CD8-positive, alpha-beta memory T cell (primary cell): ENCODE measurements at regions of chr13 and their contacts with region 1.

Region 1: DNA sequence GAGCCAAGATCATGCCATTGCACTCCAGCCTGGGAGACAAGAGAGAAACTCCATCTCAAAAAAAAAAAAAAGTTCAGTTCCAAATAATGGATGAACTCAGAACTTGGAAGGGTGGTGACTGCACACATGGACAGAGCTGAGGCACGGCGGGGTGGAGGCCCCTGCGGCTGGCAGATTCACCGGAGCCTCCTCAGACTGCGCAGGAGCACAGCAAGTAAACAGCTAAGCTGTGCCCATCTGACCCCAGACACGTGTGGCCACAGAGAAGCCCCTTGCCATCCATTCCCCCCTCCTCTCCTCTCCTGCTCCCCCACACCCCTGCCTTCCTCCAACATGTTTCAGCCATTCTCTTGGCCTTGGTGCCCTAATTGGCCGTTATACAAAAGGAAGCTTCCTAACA is 15.6 kb upstream of the PROZ start:
- DNase-seq: no peak
- H3K4me3 ChIP-seq: no peak overlapping the region
- H3K4me3 Mint-ChIP-seq: no peak overlapping the region
- H3K27ac ChIP-seq: no peak overlapping the region
- H3K27ac Mint-ChIP-seq: no peak overlapping the region
- H3K4me1 ChIP-seq: no peaks in the 10 kb centered on the region
- H3K4me1 Mint-ChIP-seq: no peaks in the 10 kb centered on the region
- H3K27me3 ChIP-seq: no peaks in the 10 kb centered on the region
- H3K27me3 Mint-ChIP-seq: peaks cover 9 to 14% of the 10 kb centered on the region in 2 donors

Region 2: GRCh38 chr13:113023217-113023597 is 119.7 kb before region 1 on chr13:
- CTCF ChIA-PET with region 1: no interaction called
- POLR2A ChIA-PET with region 1: interaction called, 10 read pairs
- DNase-seq: no peak
- H3K4me3 ChIP-seq: no peak overlapping the region
- H3K4me3 Mint-ChIP-seq: no peak overlapping the region
- H3K27ac ChIP-seq: no peak overlapping the region
- H3K27ac Mint-ChIP-seq: peak overlapping the region in 1 of 8 donors; percentile 59
- H3K4me1 ChIP-seq: no peaks in the 10 kb centered on the region
- H3K4me1 Mint-ChIP-seq: peaks cover 0 to 10% (median 3%) of the 10 kb centered on the region in 3 donors
- H3K27me3 ChIP-seq: no peaks in the 10 kb centered on the region
- H3K27me3 Mint-ChIP-seq: no peaks in the 10 kb centered on the region

Region 3: GRCh38 chr13:113064534-113065405 is 78.1 kb before region 1 on chr13:
- CTCF ChIA-PET with region 1: no interaction called
- POLR2A ChIA-PET with region 1: no interaction called
- DNase-seq: peak in 1 of 5 donors; percentile 20
- H3K4me3 ChIP-seq: no peak overlapping the region
- H3K4me3 Mint-ChIP-seq: no peak overlapping the region
- H3K27ac ChIP-seq: no peak overlapping the region
- H3K27ac Mint-ChIP-seq: no peak overlapping the region
- H3K4me1 ChIP-seq: no peaks in the 10 kb centered on the region
- H3K4me1 Mint-ChIP-seq: no peaks in the 10 kb centered on the region
- H3K27me3 ChIP-seq: no peaks in the 10 kb centered on the region
- H3K27me3 Mint-ChIP-seq: no peaks in the 10 kb centered on the region